ENCODE measurements at regions of chr6 and their contacts with region 1.

Region 1: DNA sequence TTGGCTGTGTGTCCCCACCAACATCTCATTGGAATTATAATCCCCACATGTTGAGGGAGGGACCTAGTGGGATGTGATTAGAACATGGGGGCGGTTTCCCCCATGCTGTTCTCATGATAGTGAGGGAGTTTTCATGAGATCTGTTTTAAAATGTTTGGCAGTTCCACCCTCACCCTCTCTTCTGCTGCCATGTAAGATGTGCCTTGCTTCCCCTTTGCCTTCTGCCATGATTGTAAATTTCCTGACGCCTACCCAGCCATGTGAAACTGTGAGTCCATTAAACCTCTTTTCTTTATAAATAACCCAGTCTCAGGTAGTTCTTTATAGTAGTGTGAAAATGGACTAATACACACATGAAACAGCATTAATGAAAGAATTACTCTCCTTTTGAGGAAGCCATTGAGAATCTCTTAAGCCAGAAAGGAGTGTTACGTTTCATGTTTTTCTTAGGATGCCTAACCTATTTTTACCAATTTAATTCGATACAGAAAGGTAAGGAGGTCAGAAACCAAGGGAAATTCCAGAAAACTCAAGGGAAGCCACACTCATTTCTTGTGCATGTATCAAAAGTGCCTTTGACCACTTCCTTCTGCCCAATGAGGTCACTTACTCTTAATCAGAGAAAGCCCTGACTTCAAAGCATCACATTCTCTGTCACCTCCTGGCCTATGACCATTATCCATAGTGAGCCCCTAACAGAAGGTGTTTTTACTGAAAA is 24.7 kb upstream of the HINT3 start:
- DNase-seq: no peak
- H3K4me3 Mint-ChIP-seq: no peak overlapping the region
- H3K27ac Mint-ChIP-seq: peak overlapping the region; percentile 57
- H3K4me1 Mint-ChIP-seq: peaks cover 28% of the 10 kb centered on the region
- H3K27me3 Mint-ChIP-seq: no peaks in the 10 kb centered on the region

Region 2: DNA sequence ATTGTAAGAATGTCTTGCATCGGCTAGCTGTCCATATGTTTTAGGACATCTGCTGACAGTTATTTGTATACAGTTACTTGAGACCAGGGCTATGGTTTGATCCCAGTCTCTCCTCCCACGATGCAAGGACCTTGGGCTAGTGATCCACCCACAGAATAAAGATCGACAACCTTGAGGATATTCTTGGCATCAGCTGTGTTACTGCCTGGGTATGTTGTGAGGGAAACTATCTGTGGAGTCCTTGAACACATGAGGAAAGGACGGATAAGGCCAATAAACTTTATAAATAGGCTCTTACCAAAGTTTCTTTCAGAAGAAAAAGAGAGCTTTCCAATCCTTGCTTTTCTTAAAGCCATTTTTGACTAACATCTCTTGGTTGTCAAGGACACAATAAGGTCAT is 253.3 kb before region 1 on chr6:
- intact Hi-C with region 1: no loop called
- DNase-seq: no peak
- H3K4me3 Mint-ChIP-seq: no peak overlapping the region
- H3K27ac Mint-ChIP-seq: no peak overlapping the region
- H3K4me1 Mint-ChIP-seq: no peaks in the 10 kb centered on the region
- H3K27me3 Mint-ChIP-seq: peaks cover 18% of the 10 kb centered on the region

Region 3: DNA sequence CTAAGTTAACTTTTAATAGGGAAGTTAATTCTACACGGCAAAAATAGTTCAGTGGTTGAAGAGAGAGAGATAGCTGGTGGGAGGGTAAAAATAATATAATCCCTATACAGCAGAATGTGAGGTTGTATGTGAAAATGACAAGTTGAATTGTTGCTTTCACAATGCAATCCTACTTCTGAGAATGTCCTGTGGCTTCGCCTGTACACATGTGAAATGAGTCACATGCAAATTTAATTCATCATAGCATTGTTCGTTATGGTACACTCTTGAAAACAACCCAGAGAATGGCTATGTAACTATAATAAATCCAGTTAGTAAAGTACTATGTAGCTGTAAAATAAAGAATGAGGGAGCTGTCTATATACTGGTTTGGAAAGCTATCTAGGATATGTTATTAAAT is 21.4 kb before region 1 on chr6:
- intact Hi-C with region 1: loop called (anchors 2 kb)
- DNase-seq: no peak
- H3K4me3 Mint-ChIP-seq: peak overlapping the region; percentile 40
- H3K27ac Mint-ChIP-seq: peak overlapping the region; percentile 74
- H3K4me1 Mint-ChIP-seq: peaks cover 47% of the 10 kb centered on the region
- H3K27me3 Mint-ChIP-seq: no peaks in the 10 kb centered on the region

Region 4: GRCh38 chr6:125942672-125943527 is 11.0 kb after region 1 on chr6:
- intact Hi-C with region 1: loop called (anchors 1 kb)
- DNase-seq: no peak
- H3K4me3 Mint-ChIP-seq: no peak overlapping the region
- H3K27ac Mint-ChIP-seq: peak overlapping the region; percentile 36
- H3K4me1 Mint-ChIP-seq: peaks cover 41% of the 10 kb centered on the region
- H3K27me3 Mint-ChIP-seq: peaks cover 3% of the 10 kb centered on the region